Esophagus muscularis mucosa (tissue), 4 donors: ENCODE measurements at regions of chr7 and their contacts with region 1.

Region 1: DNA sequence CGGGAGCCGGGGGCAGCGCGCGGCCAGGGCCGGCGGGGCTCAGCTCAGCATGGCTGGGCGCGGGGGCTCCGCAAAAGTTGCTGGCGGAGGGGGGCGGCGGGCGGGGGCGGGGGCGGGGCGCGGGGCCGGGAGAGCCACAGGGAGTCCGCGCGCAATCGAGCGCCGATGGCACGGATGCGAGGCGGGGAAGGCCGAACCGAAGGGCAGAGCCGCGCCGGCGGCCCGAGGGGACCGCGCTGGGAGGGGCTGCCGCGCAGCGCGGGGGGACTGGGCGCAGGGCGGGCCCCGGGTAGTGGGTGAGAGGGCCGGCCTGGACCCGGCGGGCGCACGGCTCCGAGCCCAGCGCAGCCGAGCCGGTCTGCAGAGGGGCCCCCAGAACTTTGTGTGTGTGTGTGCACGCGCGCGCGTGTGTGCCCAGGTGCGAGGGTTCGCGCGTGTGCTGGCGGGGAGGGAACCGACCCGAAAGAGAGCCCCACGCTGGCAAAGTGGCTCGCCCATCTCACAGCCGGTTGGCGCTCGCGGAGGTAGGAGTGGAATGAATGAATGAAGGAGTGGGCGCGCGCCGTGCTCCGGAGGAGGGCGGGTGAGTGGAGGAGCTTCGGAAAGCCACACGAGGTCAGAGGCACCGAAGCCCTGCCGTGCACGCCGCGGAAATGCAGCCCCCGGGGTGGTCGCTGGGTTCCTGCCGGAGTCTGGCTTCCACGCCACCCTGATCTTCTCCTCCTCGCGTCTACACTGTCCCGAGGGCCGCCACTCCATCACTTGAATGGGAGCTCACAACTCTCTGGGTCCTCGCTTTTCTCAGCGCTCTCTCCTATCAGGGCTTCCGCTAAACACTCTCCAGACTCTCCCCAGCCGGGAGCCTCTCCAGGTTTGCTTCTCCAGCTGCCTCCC is at the start of gene HIPK2:
- DNase-seq: no peak
- H3K4me3 ChIP-seq: peak within 1 kb of the TSS; percentile 80 to 93 (median 89)
- H3K27ac ChIP-seq: peak within 1 kb of the TSS; percentile 94 to 95 (median 95)
- H3K4me1 ChIP-seq: peaks cover 19 to 42% (median 33%) of the 10 kb centered on the region in 4 donors
- H3K27me3 ChIP-seq: no peaks in the 10 kb centered on the region
- CTCF ChIP-seq: no peak
- EP300 ChIP-seq: no peak
- POLR2A ChIP-seq: no peak
- total RNA-seq, gene HIPK2: 20.9 to 40.9 (median 26.7) TPM

Region 2: DNA sequence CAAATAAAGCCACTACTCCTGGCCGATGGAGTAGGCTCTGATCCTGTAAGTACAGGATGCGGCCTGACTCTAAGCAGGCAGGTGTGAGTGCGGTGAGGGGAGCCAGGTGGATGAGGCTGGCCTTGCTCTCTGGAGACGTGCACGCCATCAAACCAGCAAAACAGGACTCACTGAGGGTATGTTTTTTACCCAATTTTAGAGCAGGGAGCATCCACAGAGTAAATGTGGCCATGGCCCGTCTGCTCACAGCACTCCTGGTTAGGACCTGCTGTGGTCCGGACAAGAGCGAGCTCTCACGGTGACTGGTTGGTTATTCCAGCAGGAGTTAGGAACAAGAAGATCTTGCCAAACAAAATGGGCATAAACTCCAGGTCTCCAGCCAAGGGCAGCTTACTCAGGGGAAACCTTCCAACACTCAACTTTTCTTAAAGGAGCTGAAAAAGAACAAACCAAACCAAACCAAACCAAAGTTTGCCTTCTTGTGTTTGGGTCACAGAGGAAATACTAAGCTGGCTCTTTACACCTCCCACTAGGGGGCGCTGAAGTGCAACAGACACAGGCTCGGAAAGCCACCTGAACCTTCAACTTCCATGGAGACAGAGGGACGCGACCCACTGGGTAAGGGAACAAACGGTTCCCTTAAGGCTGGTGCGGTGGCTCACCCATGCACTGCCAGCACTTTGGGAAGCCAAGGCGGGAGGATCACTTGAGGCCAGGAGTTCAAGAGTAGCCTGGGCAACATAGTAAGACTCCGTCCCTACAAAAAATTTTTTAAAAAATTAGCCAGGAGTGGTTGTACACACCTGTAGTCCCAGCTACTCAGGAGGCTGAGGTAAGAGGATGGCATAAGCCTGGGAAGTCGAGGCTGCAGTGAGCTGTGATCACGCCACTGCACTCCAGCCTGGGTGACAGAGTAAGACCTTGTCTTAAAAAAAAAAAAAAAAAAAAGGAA is 132.3 kb before region 1 on chr7:
- intact Hi-C with region 1: loop called (anchors 5 kb)
- DNase-seq: peak; percentile 93
- H3K4me3 ChIP-seq: no peak overlapping the region
- H3K27ac ChIP-seq: no peak overlapping the region
- H3K4me1 ChIP-seq: peaks cover 16 to 45% (median 38%) of the 10 kb centered on the region in 4 donors
- H3K27me3 ChIP-seq: no peaks in the 10 kb centered on the region
- CTCF ChIP-seq: peak; percentile 84 to 95 (median 88)
- EP300 ChIP-seq: no peak
- POLR2A ChIP-seq: no peak

Region 3: GRCh38 chr7:139702811-139703486 is 75.2 kb before region 1 on chr7:
- intact Hi-C with region 1: loop called (anchors 10 kb)
- DNase-seq: no peak
- H3K4me3 ChIP-seq: no peak overlapping the region
- H3K27ac ChIP-seq: peak overlapping the region in 3 of 4 donors; percentile 12 to 58 (median 56)
- H3K4me1 ChIP-seq: peaks cover 30 to 70% (median 40%) of the 10 kb centered on the region in 4 donors
- H3K27me3 ChIP-seq: no peaks in the 10 kb centered on the region
- CTCF ChIP-seq: no peak
- EP300 ChIP-seq: no peak
- POLR2A ChIP-seq: no peak

Region 4: DNA sequence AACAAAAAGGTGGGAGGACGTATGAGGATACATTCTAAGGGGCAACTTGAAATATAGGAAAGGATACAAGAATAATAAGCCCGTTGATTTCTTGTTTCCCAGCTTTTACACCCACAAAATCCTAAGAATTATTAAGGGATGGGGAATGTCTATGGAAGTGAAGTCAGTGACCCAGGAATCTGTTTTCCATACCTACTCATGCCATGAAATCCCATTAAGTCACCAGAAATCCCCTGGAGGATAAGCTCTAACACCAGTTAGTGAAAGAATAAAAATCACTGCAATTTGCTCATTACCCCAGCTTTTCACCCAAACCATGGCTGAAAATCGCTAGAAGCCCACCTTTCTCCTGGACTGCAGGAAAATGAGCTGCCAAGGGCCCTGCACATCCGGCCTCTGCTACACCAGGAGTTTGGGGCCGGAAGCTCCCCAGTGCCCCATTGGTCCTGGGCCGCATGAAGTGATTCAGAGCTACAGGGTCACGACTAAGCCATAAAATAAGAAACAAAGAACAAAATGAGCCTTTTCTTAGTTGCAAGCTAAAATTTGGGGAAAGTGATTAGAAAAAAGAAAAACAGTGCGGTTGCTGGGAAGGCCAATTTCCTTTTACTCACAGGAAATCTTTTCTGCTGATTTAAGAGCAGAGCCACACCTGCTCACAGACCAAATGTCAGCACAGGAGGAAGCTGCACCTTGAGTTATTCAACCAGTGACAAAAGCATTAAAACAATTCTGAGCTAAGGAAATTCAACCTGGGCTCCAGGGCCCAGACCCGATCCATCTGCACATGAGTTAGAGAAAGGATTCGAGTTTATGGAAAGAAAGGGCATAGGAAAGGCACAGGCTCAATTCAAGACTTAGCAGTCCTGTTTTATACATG is 40.7 kb before region 1 on chr7:
- intact Hi-C with region 1: loop called (anchors 5 kb)
- DNase-seq: no peak
- H3K4me3 ChIP-seq: no peak overlapping the region
- H3K27ac ChIP-seq: peak overlapping the region; percentile 23 to 74 (median 44)
- H3K4me1 ChIP-seq: peaks cover 72 to 99% (median 84%) of the 10 kb centered on the region in 4 donors
- H3K27me3 ChIP-seq: no peaks in the 10 kb centered on the region
- CTCF ChIP-seq: no peak
- EP300 ChIP-seq: no peak
- POLR2A ChIP-seq: no peak

Region 5: DNA sequence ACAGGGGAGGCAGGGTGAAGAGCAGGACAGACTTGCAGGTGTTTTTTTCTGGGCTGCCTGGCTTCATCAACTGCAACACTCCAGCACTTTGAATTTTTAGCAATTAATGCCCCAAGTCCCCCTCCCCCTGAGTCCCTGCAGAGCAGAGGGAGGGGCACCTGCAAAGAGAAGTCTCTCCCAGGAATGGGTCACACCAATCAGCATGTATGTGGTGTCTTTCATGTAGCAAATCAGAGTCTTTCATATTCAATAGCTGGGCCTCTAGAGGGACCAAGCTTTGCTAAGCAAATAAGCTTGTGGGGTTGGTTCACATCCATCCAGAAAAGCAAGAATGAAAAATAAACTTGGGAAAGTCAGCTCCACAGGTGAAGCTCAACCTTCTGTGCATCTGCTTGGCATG is 193.8 kb after region 1 on chr7:
- intact Hi-C with region 1: no loop called
- DNase-seq: no peak
- H3K4me3 ChIP-seq: no peak overlapping the region
- H3K27ac ChIP-seq: no peak overlapping the region
- H3K4me1 ChIP-seq: peaks cover 3 to 46% (median 35%) of the 10 kb centered on the region in 4 donors
- H3K27me3 ChIP-seq: no peaks in the 10 kb centered on the region
- CTCF ChIP-seq: no peak
- EP300 ChIP-seq: no peak
- POLR2A ChIP-seq: no peak

Region 6: GRCh38 chr7:140003913-140004382 is 225.8 kb after region 1 on chr7:
- intact Hi-C with region 1: loop called (anchors 2 kb)
- DNase-seq: no peak
- H3K4me3 ChIP-seq: no peak overlapping the region
- H3K27ac ChIP-seq: no peak overlapping the region
- H3K4me1 ChIP-seq: no peaks in the 10 kb centered on the region
- H3K27me3 ChIP-seq: no peaks in the 10 kb centered on the region
- CTCF ChIP-seq: peak; percentile 36 to 44 (median 38)
- EP300 ChIP-seq: no peak
- POLR2A ChIP-seq: no peak